Vagina (tissue), 2 donors: ENCODE measurements at regions of chr4 and their contacts with region 1.

Region 1: GRCh38 chr4:74133786-74134499 is 24.0 kb upstream of the MTHFD2L start:
- DNase-seq: no peak
- H3K4me3 ChIP-seq: no peak overlapping the region
- H3K27ac ChIP-seq: no peak overlapping the region
- H3K4me1 ChIP-seq: no peaks in the 10 kb centered on the region
- H3K27me3 ChIP-seq: no peaks in the 10 kb centered on the region
- CTCF ChIP-seq: peak; percentile 47 to 65 (median 55)
- POLR2A ChIP-seq: no peak

Region 2: GRCh38 chr4:73662709-73663546 is 471.0 kb before region 1 on chr4:
- intact Hi-C with region 1: loop called (anchors 10 kb)
- DNase-seq: no peak
- H3K4me3 ChIP-seq: no peak overlapping the region
- H3K27ac ChIP-seq: no peak overlapping the region
- H3K4me1 ChIP-seq: no peaks in the 10 kb centered on the region
- H3K27me3 ChIP-seq: no peaks in the 10 kb centered on the region
- CTCF ChIP-seq: peak in 2 of 3 experiments; percentile 49 to 58
- POLR2A ChIP-seq: no peak